Posterior vena cava (tissue), 2 donors: ENCODE measurements at regions of chr16 and their contacts with region 1.

Region 1: DNA sequence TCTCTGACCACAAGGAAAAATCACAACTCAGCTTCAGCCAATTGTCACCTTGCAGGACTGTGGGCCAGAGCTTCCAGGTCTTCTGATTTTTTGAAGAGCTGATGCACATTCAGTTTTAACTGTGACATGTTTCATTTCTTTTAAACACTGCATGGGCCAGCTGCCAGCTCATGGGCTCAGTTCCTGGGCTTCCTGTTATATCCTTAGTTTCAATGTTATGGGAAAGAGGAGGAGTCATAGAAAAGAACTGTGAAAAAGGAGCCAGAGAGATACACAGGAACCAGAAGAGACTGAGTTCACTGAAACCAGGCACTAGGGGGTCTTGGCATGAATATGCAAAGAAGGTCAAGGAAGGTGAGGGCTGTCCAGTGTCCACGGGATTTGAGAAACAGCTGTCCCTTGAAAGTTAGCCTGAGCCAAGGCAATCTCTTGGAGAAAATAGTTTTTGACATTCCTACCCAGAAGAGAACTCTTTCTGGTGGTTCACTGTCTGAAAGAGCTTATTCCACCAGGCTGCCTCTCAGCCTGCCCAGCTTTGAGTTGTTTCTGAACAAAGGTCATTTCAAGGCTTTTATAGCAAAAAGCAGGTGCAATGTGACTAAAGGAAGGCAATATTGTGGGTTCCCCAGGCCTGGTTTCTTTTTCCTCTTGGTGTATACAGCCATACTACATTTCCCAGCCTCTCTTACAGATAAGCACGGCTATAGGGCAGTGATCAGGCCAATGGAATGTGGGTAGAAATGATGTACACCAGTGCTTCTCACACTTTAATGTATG is 10.5 kb downstream of the PDILT start:
- DNase-seq: no peak

Region 2: DNA sequence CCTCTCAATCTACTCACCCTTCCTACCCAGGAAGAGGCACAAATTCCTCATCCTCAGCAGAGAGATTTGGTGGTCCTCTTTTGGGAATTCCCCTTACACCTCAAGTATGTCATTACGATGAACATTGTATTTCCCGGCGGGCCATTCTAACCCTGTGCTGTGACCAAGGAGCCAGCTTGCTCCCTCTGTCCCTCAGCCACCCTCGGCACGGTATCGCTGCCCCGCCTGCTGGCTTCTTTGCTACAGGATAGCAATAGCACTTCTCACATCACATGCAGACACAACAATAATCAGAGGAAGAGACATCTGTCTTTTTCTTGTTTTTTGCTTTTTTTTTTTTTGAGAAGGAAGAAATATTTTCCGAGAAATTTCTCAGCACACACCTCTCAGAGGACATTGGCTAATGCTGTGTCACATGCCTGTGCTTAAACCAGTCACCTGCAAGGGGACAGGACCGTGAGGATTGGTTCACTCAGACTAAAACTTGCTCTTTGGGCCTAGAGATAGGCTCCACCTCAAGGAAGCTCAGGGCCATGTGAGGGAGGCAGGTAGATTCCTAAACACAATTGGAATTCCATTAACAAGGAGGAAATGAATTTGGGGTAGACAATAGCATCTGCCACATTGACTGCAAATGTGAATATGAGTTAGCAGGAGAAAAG is 935.1 kb before region 1 on chr16:
- intact Hi-C with region 1: loop called in 1 of 2 experiments (anchors 5 kb)
- DNase-seq: no peak

Region 3: DNA sequence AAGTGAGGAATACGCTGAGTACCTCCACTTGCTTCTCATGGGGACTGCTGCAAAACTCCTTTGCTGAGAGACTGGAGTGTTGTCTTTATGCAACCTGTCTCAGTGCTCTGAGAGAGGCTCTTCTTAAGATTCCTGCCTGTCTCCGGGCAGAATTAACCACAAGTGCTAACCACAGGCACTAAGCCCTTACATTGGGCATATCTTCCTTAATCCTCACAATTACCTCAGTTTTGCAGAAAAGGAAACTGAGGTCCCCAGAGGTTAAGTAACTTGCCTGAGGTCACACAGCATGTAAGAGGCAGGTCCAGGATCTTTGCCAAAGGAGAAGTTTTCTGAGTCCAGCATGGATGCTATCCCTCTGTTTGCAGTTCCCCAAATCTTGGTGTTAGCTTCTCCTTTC is 152.7 kb before region 1 on chr16:
- intact Hi-C with region 1: no loop called
- DNase-seq: no peak

Region 4: GRCh38 chr16:20441191-20441590 is 47.2 kb after region 1 on chr16:
- intact Hi-C with region 1: no loop called
- DNase-seq: no peak

Region 5: DNA sequence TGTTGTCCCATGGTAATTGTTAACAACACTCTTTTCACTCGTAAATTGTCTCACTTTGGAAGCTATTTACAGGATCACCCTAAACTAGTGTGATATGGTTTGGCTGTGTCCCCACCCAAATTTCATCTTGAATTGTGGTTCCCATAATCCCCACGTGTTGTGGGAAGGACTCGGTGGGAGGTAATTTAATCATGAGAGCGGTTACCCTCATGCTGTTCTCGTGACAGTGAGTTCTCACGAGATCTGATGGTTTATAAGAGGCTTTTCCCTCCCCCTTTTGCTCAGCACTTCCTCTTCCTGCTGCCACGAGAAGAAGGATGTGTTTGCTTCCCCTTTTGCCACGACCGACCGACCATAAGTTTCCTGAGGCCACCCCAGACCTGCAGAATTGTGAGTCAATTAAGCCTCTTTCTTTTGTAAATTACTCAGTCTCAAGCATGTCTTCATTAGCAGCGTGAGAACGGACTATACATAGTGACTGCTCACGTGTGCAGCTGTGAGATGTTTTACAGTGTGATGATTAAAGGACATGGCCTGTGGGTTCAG is 722.2 kb after region 1 on chr16:
- intact Hi-C with region 1: no loop called
- DNase-seq: no peak